Left colon (tissue), 2 donors: ENCODE measurements at regions of chr11 and their contacts with region 1.

Region 1: DNA sequence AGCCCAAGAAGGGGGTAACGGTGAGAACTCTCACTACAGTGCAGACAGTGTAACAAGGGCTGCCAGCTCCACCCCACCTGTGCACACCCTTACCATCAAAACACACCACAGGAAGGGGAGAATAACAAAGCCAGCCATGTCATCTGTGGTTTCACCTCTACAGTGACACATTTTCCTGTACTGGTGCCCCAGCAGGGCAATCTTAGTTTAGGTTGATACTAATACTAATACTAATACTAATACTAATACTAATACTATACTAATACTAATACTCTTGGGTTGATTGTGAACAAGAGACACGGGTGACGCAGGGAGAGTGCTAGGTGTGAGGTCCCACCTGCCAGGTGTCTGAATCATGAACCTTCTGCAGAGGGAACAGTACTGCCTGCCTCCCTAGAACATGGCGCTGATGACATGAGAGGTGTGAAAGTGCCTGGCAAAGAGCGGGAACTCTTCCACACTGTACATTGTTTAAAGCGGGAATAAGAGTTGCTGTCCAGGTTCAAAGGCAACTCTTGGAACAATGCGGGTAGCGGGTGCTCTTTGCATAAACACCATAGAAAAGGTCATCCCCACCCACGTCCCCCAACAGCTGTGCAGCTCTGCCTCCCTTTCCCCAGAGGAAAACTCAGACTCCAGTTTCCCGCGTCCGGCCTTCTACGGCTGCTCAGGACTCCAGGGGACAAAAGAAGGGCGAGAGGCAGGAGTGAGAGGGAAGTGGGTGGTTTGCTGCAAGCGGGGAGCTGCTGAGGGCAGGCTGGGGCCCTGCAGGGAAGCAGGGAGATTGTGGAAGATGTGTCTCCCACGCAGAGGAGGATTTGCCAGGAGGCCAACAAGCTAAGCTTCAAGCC is 25.0 kb upstream of the TMPRSS4 start:
- DNase-seq: no peak
- ATAC-seq: peak; percentile 22

Region 2: DNA sequence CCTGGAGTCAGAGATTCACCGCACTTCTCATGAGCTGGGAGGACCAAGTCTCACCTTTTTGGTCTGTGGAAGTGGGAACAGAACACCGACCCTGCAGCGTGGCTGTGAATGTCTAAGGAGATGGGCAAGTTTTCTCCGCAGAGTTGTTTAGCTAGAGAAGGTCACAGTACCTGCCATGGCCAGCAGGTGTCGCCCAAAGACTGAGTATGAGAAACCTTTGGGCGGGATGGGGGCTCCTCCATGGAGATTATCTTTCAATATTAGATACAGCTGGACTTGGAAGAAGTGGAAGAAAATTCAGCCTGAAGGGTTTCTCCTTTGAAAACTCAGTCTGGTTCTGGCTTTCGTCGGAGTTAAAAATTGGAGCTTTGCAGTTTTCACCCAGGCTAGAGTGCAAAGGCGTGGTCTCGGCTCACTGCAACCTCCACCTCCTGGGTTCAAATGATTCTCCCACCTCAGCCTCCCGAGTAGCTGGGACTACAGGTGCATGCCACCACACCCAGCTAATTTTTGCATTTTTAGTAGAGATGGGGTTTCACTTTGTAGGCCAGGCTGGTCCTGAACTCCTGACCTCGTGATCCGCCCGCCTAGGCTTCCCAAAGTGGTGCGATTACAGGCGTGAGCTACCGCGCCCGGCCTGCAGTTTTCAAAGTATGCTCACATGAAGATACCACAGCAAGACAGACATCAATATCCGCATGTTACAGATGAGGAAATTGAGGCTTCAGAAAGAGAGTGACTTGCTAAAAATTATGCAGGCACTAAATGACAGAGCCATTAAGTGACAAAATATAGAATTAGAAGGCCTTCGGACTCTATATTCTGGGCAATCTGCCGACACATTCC is 244.1 kb before region 1 on chr11:
- intact Hi-C with region 1: loop called in 1 of 2 experiments (anchors 10 kb)
- DNase-seq: peak in 1 of 2 donors; percentile 93
- ATAC-seq: peak; percentile 43

Region 3: DNA sequence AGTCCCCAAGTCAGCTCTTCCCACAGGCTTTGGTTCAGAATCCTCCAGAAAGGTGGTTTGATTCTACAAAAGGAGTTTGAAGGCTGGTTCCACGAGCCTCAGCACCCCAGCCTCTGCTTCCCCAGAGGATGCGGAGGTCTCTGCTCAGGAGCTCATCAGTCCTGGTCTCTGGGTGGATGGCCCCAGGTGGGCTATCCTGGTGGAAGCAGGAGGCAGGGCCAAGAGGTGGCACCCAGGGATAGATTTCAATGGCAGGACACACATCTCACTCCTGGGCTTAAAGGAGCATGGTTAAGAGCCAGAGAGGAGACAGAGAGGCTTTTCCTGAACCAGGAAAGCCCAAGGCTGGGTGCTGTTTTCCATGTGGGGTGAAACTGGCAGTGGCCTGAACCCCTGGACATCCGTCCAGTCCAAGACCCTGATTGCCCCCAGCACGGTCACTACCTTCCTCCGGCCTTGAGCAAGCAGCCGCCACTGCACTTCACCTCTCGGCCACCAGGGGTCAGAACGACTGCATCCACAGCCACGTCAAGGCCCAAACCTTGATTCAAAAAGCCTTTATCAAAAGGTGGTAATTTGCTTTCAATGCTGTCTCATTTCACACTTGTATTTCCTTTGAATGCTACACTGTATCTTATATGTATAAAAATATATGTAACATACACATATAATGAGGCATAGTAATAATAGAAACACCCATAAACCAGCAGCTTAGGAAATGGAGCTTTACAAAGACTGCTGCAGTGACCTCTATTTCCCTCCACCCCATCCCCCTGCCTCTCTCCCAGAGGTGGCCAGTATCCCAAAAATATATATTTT is 208.0 kb before region 1 on chr11:
- intact Hi-C with region 1: loop called in 1 of 2 experiments (anchors 10 kb)
- DNase-seq: peak; percentile 57 to 88
- ATAC-seq: peak; percentile 73

Region 4: GRCh38 chr11:117946842-117947526 is 104.9 kb before region 1 on chr11:
- intact Hi-C with region 1: loop called in 1 of 2 experiments (anchors 10 kb)
- DNase-seq: peak; percentile 75 to 89
- ATAC-seq: peak; percentile 96